Dorsolateral prefrontal cortex (tissue), 120 donors: ENCODE measurements at regions of chr4 and their contacts with region 1.

Region 1: DNA sequence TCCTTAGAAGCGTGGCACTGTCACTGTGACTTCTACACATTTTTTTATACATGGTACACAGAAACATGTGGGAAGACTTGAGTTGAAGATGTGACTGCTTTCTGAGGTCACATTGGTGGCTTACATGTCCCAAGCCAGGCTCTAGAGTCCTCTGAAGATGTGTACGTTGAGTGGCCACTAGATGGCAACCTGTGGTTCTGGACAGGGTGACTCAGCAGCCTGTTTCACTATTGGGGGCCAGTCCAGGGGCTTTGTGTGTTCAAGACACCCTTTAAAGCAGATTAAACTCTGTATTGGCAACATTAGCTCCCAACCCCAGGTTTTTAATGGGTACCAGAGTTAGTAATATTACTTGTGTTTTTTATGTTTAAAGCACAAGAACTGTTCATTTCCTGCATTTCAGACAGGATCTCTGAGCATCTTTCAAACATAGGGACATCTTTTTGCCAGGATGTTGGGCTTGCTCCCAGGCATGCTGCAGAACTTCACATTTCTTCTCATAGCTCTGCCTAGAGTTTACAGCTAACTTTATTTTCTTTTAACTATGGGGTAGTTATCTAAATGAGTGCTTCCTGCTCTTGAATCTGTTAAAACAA is 53.0 kb downstream of the DCUN1D4 start:
- DNase-seq: peak in 9 of 10 donors; percentile 47 to 70 (median 60)
- H3K4me3 ChIP-seq: no peak overlapping the region
- H3K27ac ChIP-seq: peak overlapping the region in 34 of 59 donors; percentile 5 to 73 (median 48)
- H3K27me3 ChIP-seq: no peaks in the 10 kb centered on the region
- CTCF ChIP-seq: peak; percentile 45 to 89 (median 78)

Region 2: DNA sequence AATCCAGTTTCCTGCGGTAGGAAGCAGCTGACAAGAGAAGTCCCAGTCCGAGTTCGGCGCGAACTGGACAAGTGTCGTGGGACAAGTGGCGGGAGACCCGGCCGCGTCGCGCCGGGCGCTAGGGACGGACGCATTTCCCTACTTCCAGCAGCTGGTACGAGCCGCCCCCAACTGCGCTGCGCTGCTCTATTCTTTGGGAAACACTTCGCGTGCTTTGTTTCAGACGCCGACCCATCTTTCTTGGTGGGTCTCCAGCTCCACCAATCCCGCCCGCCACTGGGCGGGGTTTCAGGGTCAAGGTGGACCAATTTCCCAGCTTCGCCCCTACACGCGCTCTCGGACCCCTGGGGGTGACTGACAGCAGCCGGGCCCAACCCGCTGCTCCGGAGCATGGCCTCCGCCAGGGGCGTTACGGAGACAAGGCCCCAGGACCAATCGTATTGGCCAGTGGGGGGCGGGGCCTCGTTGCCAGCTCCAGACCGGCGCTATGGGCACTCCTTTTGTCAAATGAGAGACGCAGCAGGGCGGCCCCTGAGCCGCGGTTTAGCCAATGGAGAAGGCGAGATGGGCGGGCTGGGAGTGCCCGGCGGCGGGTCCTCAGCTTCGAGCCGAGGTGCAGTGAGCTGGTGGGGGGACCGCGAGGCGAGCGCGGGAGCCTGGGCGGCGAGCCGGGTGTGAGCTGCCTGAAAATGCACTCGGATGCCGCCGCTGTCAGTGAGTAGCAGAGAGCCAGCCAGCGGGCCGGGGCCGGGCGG is 53.2 kb before region 1 on chr4 and contains the start of gene DCUN1D4:
- intact Hi-C with region 1: loop called in 1 of 2 experiments (anchors 2 kb)
- DNase-seq: peak; percentile 99 to 100 (median 100)
- H3K4me3 ChIP-seq: peak within 1 kb of the TSS; percentile 64 to 99 (median 85)
- H3K27ac ChIP-seq: peak within 1 kb of the TSS; percentile 28 to 97 (median 93)
- H3K27me3 ChIP-seq: no peaks in the 10 kb centered on the region
- CTCF ChIP-seq: peak in 55 of 56 donors; percentile 21 to 78 (median 62)
- total RNA-seq, gene DCUN1D4: 64.1 to 133 (median 104) TPM

Region 3: GRCh38 chr4:52019936-52020657 is 124.2 kb after region 1 on chr4 and contains the start of gene LRRC66:
- intact Hi-C with region 1: loop called (anchors 5 to 10 kb)
- DNase-seq: no peak
- H3K4me3 ChIP-seq: no peak within 1 kb of the TSS
- H3K27ac ChIP-seq: no peak within 1 kb of the TSS
- H3K27me3 ChIP-seq: no peaks in the 10 kb centered on the region
- CTCF ChIP-seq: no peak
- total RNA-seq, gene LRRC66: 0.47 to 3.6 (median 1.5) TPM

Region 4: GRCh38 chr4:52028969-52029368 is 133.1 kb after region 1 on chr4:
- intact Hi-C with region 1: loop called (anchors 5 to 10 kb)
- DNase-seq: no peak
- H3K4me3 ChIP-seq: no peak overlapping the region
- H3K27ac ChIP-seq: no peak overlapping the region
- H3K27me3 ChIP-seq: no peaks in the 10 kb centered on the region
- CTCF ChIP-seq: no peak